ENCODE measurements at regions of chr9 and their contacts with region 1.

Region 1: GRCh38 chr9:137129456-137130175 is 9.3 kb upstream of the GRIN1 start:
- DNase-seq: peak; percentile 97
- H3K4me3 ChIP-seq: peak overlapping the region; percentile 88
- H3K27ac ChIP-seq: peak overlapping the region; percentile 47
- H3K4me1 ChIP-seq: peaks cover 22% of the 10 kb centered on the region; the same call in 1 of the 2 replicates
- H3K27me3 ChIP-seq: no peaks in the 10 kb centered on the region

Region 2: GRCh38 chr9:137217276-137218211 is 87.9 kb after region 1 on chr9:
- in situ Hi-C with region 1: loop called (anchors 10 kb)
- DNase-seq: peak; percentile 67
- H3K4me3 ChIP-seq: peak overlapping the region; percentile 46
- H3K27ac ChIP-seq: no peak overlapping the region
- H3K4me1 ChIP-seq: peaks cover 13% of the 10 kb centered on the region
- H3K27me3 ChIP-seq: no peaks in the 10 kb centered on the region